Breast epithelium (tissue), 4 donors: ENCODE measurements at regions of chr1 and their contacts with region 1.

Region 1: DNA sequence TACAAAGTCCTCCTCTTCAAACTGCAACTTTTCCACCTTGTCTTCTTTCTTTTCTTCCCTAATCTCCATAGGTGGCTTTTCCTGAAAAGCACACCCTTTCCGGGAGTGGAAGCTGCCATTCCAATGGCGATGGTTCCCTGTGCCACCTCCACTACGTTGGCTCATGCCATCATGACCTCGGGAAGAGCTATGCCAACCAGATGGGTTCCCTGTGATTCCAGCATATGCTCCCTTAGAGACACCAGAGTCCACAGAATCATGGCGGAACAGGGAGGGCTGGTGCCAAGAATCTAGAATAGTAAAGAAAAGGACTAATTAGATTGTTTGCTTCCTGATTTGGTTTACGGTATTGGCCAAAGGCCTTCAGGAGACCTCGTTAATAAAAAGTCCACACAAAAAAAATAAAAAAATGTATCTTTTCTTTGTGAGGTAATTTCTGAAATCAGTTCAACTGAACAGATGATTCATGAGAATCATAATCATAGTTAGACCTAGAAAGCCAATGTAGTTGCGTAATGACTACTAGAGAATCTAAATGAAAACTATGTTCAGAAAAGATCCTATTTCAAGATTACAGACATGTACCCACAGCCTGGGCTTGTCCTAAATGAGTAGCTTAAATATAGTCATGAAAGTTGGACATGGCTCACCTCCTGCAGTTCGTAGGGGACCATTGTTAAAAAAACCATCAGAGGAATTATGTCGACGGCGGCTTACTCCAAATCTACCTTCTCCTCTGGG is 30.9 kb upstream of the CCDC17 start:
- DNase-seq: no peak
- H3K4me3 ChIP-seq: no peak overlapping the region
- H3K27ac ChIP-seq: no peak overlapping the region
- H3K4me1 ChIP-seq: no peaks in the 10 kb centered on the region
- H3K27me3 ChIP-seq: no peaks in the 10 kb centered on the region
- CTCF ChIP-seq: no peak
- POLR2A ChIP-seq: no peak

Region 2: DNA sequence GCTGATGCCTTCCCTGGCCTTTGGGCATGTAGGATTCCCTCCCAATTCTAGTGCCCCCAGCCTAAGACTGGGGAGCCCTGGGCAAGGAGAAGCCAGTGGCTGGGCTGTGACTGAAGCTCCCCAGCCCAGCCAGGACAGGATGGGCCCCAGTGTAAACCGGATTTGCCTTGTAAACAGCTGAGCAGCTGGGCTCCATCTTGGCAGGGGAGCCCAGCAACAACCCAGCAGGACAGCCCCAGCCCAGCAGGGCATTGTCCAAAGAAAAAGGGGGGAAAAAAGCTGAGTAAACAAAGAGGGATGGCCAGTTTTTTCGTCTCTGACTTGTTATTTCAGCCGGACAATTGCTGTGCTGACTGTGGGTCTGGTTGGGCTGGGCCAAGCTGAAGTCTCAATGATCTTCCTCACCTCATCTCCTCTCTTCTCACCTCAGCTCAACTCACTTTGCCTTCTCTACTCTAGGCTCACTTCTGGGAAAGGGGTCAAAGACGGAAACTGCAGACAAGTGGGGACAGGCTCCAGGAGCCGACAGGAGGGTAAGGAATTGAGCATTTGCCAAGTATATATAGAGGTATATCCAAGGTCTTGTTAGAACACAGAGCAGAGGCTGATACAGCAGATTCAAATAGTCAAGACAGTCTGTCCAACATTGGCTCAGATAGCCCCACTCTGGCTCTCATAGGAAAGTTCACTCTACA is 1078.1 kb before region 1 on chr1:
- intact Hi-C with region 1: no loop called
- DNase-seq: no peak
- H3K4me3 ChIP-seq: no peak overlapping the region
- H3K27ac ChIP-seq: no peak overlapping the region
- H3K4me1 ChIP-seq: no peaks in the 10 kb centered on the region
- H3K27me3 ChIP-seq: no peaks in the 10 kb centered on the region
- CTCF ChIP-seq: no peak
- POLR2A ChIP-seq: no peak

Region 3: DNA sequence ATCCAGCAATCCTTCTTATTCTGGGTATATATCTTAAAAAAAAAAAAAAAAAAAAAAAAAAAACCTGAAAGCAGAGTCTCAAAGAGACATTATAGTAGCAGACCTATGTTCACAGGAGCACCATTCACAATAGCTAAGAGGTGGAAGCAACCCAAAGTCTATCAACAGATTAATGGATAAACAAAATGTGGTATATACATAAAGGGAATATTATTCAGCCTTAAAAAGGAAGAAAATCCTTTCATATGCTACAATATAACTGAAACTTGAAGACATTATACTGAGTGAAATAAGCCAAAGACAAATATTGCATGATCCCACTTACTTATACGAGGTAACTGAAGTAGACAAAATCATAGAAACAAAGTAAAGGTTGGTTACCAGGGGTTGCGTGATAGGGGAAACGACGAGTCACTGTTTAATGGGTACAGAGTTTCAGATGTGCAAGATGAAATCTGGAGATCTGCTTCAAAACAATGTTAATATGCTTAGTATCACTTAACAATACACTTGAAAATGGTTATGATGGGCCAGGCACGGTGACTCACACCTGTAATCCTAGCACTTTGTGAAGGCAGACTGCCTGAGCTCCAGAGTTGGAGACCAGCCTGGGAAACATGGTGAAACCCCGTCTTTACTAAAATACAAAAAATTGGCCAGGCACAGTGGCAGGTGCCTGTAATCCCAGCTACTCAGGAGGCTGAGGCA is 448.2 kb after region 1 on chr1:
- intact Hi-C with region 1: loop called (anchors 5 kb)
- DNase-seq: no peak
- H3K4me3 ChIP-seq: no peak overlapping the region
- H3K27ac ChIP-seq: no peak overlapping the region
- H3K4me1 ChIP-seq: no peaks in the 10 kb centered on the region
- H3K27me3 ChIP-seq: no peaks in the 10 kb centered on the region
- CTCF ChIP-seq: no peak
- POLR2A ChIP-seq: no peak

Region 4: GRCh38 chr1:46303038-46303871 is 648.5 kb after region 1 on chr1 and contains the starts of genes LRRC41 and UQCRH:
- intact Hi-C with region 1: no loop called
- DNase-seq: peak; percentile 95 to 96
- H3K4me3 ChIP-seq: peak within 1 kb of the TSS; percentile 68 to 97 (median 86)
- H3K27ac ChIP-seq: peak within 1 kb of the TSS; percentile 96 to 98
- H3K4me1 ChIP-seq: peaks cover 8 to 22% of the 10 kb centered on the region in 2 donors
- H3K27me3 ChIP-seq: no peaks in the 10 kb centered on the region
- CTCF ChIP-seq: no peak
- POLR2A ChIP-seq: peak; percentile 86
- total RNA-seq, gene LRRC41: 60.0 to 85.5 (median 69.2) TPM
- total RNA-seq, gene UQCRH: 300 to 334 (median 301) TPM